Common myeloid progenitor, CD34-positive (primary cell): ENCODE measurements at regions of chr9 and their contacts with region 1.

Region 1: DNA sequence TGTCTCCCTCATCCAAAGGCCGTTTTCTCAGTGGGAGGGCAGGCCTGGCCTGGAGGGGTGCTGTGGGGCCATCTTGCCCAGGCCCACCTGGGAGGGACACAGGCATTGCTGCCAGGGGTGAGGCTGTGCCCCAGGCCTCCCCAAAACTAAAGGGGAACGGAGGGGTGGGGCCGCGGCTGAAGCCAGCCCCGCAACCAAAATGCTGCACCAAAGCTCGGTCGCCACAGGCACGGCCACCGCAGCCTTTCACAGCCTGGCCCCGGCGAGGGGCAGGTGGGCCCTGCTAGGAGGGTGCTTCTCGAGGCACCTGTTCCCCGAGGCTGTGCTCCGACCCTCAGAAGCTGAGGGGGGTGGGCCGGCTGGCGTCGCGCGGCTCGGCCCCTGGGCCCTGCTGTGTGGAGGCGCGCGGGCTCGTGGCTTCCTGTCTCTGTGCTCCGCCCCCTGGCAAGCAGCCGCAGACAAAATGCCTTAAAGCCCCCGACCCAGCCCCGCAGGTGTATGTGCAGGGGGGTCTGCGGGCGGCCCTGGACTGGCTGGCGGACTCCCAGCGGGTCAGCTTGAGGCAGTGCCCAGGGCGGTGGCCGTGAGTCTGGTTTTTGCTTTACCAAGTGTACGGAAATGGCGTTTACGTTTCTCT is 57.7 kb downstream of the JAK2 start:
- DNase-seq: peak in 1 of 3 donors; percentile 16
- H3K4me3 ChIP-seq: no peak overlapping the region
- H3K27ac ChIP-seq: no peak overlapping the region
- H3K4me1 ChIP-seq: no peaks in the 10 kb centered on the region
- H3K27me3 ChIP-seq: no peaks in the 10 kb centered on the region

Region 2: GRCh38 chr9:5002811-5003210 is 39.9 kb before region 1 on chr9:
- CTCF ChIA-PET with region 1: no interaction called
- POLR2A ChIA-PET with region 1: no interaction called
- DNase-seq: no peak
- H3K4me3 ChIP-seq: no peak overlapping the region
- H3K27ac ChIP-seq: no peak overlapping the region
- H3K4me1 ChIP-seq: no peaks in the 10 kb centered on the region
- H3K27me3 ChIP-seq: no peaks in the 10 kb centered on the region

Region 3: DNA sequence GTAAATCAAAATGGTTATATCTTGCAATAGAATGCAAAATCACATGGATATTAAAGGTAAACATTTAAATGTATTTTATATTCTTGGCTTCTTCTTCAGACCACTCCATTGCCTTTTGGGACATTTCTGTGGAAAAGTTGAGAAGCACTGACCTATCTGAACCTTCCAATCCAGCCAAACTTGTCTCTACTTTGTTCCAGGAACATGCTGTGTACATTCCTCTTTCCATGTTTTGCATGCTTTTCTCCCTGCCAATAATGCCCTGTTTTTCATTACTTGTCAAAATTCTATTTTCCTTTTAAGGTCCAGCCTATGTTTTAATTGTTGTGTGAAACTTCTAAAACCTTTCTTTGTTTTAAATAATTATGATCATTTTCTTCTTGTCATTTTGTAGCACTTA is 29.4 kb before region 1 on chr9:
- CTCF ChIA-PET with region 1: no interaction called
- POLR2A ChIA-PET with region 1: no interaction called
- DNase-seq: no peak
- H3K4me3 ChIP-seq: no peak overlapping the region
- H3K27ac ChIP-seq: no peak overlapping the region
- H3K4me1 ChIP-seq: no peaks in the 10 kb centered on the region
- H3K27me3 ChIP-seq: no peaks in the 10 kb centered on the region

Region 4: DNA sequence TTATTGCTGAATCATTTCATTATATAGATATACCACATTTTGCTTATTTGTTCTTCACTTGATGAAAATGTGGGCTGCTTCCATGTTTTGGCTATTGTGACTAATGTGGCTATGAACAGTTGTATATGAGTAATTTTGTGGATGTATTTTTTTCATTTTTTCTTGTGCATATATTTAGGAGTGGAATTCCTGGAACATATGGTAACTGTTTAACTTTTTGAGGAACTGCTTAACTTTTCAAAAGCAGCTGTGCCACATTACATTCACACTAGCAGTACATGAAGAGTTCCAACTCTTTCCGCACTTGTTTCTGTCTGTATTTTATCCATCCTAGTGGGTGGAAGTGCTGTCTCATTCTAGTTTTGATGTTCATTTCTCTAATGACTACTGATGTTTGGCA is 10.1 kb after region 1 on chr9:
- CTCF ChIA-PET with region 1: no interaction called
- POLR2A ChIA-PET with region 1: no interaction called
- DNase-seq: no peak
- H3K4me3 ChIP-seq: no peak overlapping the region
- H3K27ac ChIP-seq: no peak overlapping the region
- H3K4me1 ChIP-seq: no peaks in the 10 kb centered on the region
- H3K27me3 ChIP-seq: no peaks in the 10 kb centered on the region

Region 5: GRCh38 chr9:5549658-5550310 is 507.0 kb after region 1 on chr9:
- CTCF ChIA-PET with region 1: no interaction called
- POLR2A ChIA-PET with region 1: interaction called, 11 read pairs
- DNase-seq: no peak
- H3K4me3 ChIP-seq: no peak overlapping the region
- H3K27ac ChIP-seq: no peak overlapping the region
- H3K4me1 ChIP-seq: no peaks in the 10 kb centered on the region
- H3K27me3 ChIP-seq: no peaks in the 10 kb centered on the region